PC-9 (cell line): ENCODE measurements at regions of chr3 and their contacts with region 1.

Region 1: DNA sequence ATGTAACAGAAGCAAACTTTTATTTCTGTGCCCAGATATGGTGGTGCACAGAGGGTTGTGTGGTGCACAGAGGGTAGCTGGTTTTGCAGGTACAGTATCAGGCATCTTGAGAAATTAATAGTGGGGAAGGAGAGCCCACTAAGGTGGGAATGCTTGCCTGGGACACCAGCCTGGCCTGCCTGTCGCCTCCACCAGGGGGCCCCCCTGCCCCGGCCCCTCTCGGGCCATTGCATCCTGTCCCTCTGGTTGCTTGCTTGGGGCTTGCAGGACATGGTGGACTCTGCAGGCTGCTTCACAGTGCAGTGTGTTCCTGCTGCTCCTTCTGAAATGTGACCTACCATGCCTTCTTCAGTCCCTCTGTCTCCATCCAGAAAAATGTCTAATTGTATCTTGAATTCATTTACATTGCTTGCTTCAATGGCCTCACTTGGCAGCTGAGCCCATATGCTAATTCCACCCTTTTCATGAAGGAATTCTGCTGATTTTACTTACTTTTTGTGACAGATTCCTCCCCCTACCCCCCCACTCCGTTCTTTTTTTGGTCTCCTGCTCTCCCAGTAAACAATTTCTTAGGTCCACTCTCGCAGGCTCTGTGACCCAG is 73.6 kb downstream of the EEFSEC start:
- DNase-seq: peak in 1 of 2 experiments; percentile 68
- H3K4me3 ChIP-seq: no peak overlapping the region
- H3K27ac ChIP-seq: no peak overlapping the region
- H3K4me1 ChIP-seq: no peaks in the 10 kb centered on the region
- H3K27me3 ChIP-seq: no peaks in the 10 kb centered on the region
- CTCF ChIP-seq: peak; percentile 81

Region 2: GRCh38 chr3:127848131-127849129 is 378.5 kb before region 1 on chr3:
- CTCF ChIA-PET with region 1: no interaction called
- POLR2A ChIA-PET with region 1: no interaction called
- intact Hi-C with region 1: no loop called
- DNase-seq: peak in 1 of 2 experiments; percentile 51
- H3K4me3 ChIP-seq: no peak overlapping the region
- H3K27ac ChIP-seq: no peak overlapping the region
- H3K4me1 ChIP-seq: peaks cover 10% of the 10 kb centered on the region; the same call in 1 of the 2 replicates
- H3K27me3 ChIP-seq: no peaks in the 10 kb centered on the region
- CTCF ChIP-seq: no peak

Region 3: GRCh38 chr3:128322066-128323022 is 95.4 kb after region 1 on chr3:
- CTCF ChIA-PET with region 1: interaction called, 6 read pairs
- POLR2A ChIA-PET with region 1: no interaction called
- intact Hi-C with region 1: loop called (anchors 1 kb)
- DNase-seq: peak; percentile 42 to 49
- H3K4me3 ChIP-seq: no peak overlapping the region
- H3K27ac ChIP-seq: no peak overlapping the region
- H3K4me1 ChIP-seq: peaks cover 15% of the 10 kb centered on the region
- H3K27me3 ChIP-seq: no peaks in the 10 kb centered on the region
- CTCF ChIP-seq: peak; percentile 55